GM12878 (cell line): ENCODE measurements at regions of chr11 and their contacts with region 1.

Region 1: GRCh38 chr11:24747275-24748251 is 250.7 kb downstream of the LUZP2 start:
- DNase-seq: no peak
- ATAC-seq: no peak
- H3K4me3 ChIP-seq: no peak overlapping the region
- H3K27ac ChIP-seq: no peak overlapping the region
- H3K4me1 ChIP-seq: no peaks in the 10 kb centered on the region
- H3K27me3 ChIP-seq: no peaks in the 10 kb centered on the region
- CTCF ChIP-seq: no peak
- EP300 ChIP-seq: no peak
- POLR2A ChIP-seq: no peak
- RAD21 ChIP-seq: no peak

Region 2: DNA sequence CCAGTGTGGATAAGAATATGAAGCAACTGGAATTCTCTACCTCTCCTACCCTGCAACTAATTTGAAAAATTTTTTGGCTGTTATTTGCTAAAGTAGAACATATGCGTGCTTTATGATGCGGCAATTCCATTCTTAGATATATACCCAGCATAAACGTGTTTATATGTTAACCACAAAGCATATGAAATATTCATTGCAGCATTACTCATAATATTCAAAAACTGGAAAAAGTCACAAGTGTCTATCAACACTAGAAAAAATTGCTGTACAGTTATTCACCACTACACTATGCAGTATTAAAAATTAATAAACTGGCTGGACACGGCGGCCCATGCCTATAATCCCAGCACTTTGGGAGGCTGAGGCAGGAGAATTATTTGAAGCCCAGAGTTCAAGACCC is 24.3 kb before region 1 on chr11:
- CTCF ChIA-PET with region 1: no interaction called
- POLR2A ChIA-PET with region 1: no interaction called
- RAD21 ChIA-PET with region 1: no interaction called
- SMC1A ChIA-PET with region 1: no interaction called
- in situ Hi-C with region 1: no loop called
- intact Hi-C with region 1: loop called (anchors 2 kb)
- DNase-seq: no peak
- ATAC-seq: no peak
- H3K4me3 ChIP-seq: no peak overlapping the region
- H3K27ac ChIP-seq: no peak overlapping the region
- H3K4me1 ChIP-seq: no peaks in the 10 kb centered on the region
- H3K27me3 ChIP-seq: no peaks in the 10 kb centered on the region
- CTCF ChIP-seq: no peak
- EP300 ChIP-seq: no peak
- POLR2A ChIP-seq: no peak
- RAD21 ChIP-seq: no peak